Astrocyte of the cerebellum (primary cell): ENCODE measurements at regions of chr1 and their contacts with region 1.

Region 1: GRCh38 chr1:46274223-46275029 is 26.9 kb downstream of the RAD54L start:
- DNase-seq: no peak
- H3K4me3 ChIP-seq: no peak overlapping the region
- CTCF ChIP-seq: no peak

Region 2: GRCh38 chr1:46062651-46063319 is 211.6 kb before region 1 on chr1:
- in situ Hi-C with region 1: no loop called
- DNase-seq: no peak
- H3K4me3 ChIP-seq: no peak overlapping the region
- CTCF ChIP-seq: no peak

Region 3: GRCh38 chr1:46197964-46198811 is 76.2 kb before region 1 on chr1 and contains the start of gene POMGNT1:
- in situ Hi-C with region 1: loop called (anchors 5 kb)
- DNase-seq: no peak
- H3K4me3 ChIP-seq: peak within 1 kb of the TSS; percentile 87
- CTCF ChIP-seq: no peak

Region 4: DNA sequence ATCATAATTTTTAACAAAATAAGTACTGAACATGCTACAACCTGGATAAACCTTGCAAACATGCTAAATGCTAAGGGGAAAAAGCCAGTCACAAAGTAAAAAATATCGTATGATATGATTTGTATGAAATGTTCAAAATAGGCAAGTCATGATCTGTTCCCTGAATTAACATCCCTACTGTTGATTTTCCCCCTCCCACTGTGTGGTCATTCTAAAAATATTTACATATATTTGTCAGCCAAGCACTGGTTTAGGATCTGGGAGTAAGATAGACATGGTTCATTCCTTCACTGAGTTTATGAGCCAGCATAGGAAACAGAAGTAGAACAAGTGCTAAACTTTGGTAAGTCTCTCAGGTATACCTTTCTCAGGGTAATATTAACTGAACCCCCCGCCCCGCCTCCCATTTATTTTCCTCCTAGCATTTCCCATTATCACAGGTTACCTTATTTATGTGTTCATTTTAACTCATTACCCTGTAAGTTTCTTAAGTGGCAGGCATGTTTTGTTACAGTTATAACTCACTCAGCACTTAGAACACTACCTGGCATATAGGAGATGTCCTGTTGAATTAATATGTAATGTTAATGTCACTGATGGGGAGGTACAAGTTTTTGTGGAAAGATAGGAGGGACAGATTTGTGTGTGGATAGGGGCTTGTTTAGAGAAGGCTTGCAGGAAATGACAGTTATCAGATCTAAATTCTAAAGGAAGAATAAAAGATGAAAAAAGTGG is 41.4 kb after region 1 on chr1:
- in situ Hi-C with region 1: no loop called
- DNase-seq: no peak
- H3K4me3 ChIP-seq: no peak overlapping the region
- CTCF ChIP-seq: no peak